ENCODE measurements at regions of chr5 and their contacts with region 1.

Region 1: DNA sequence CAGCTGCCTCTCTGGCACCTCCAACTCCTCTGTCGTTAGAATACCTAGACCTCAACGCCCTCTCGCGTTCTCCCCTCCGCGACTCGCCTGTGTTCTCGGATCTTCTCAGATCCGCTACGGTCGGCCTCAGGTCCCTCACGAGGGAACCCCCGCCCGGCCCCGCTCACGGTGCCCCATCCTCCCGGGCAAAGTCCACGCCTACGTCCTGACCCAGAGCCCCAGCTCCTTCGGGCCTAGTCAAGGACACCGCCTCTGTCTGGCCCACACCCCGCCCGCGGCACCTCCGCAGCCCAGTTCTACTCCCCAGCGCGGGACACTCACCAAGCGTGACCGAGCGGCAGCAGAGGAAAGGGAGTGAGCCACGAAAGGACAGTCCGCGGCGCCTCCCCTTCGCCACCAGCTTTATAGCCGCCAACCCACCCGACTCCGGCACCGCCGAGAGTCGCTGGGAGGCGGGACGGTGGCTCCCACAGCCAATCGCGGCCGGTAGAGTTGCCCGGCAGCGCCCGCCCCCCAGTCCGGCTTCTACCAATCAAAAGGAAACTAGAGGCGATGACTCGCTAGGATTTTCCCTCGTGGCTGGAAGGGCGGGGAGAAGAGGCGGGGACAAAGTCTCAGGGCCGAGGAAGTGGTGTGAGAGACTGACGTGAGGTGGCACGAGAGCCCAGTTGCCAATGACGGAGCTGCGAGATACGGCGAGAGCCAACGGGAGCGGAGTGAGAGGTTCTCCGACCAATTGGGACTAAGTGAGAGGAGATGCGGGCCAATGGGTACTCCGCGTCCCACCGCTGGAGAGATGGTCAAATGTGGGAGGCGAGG is at the start of gene HMGCS1:
- DNase-seq: peak; percentile 99
- H3K4me3 Mint-ChIP-seq: peak within 1 kb of the TSS; percentile 93
- H3K27ac Mint-ChIP-seq: peak within 1 kb of the TSS; percentile 98
- H3K4me1 Mint-ChIP-seq: peaks cover 73% of the 10 kb centered on the region
- H3K27me3 Mint-ChIP-seq: no peaks in the 10 kb centered on the region
- total RNA-seq, gene HMGCS1: 216 and 218 TPM in 2 replicates

Region 2: DNA sequence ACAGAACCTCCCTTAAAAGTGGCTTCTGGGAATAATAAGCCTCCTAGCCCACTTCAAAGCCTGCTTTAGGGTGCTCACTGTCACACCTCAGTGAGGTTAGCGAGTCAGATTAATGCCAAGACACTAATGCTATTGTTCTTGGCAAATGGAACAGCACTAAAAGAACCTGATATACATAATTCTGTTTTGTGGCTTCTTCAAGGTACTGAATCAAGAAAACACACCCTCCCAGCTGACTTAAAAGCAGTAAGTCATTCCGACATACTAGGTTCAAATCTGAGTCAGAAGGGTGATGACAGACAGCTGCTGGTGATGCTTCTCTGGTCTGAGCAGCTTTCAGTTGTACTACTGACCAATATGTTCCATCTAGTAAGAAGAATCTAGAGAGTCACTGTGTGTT is 1564.6 kb before region 1 on chr5:
- intact Hi-C with region 1: loop called (anchors 2 kb)
- DNase-seq: no peak
- H3K4me3 Mint-ChIP-seq: no peak overlapping the region
- H3K27ac Mint-ChIP-seq: peak overlapping the region; percentile 50
- H3K4me1 Mint-ChIP-seq: peaks cover 18% of the 10 kb centered on the region
- H3K27me3 Mint-ChIP-seq: no peaks in the 10 kb centered on the region

Region 3: DNA sequence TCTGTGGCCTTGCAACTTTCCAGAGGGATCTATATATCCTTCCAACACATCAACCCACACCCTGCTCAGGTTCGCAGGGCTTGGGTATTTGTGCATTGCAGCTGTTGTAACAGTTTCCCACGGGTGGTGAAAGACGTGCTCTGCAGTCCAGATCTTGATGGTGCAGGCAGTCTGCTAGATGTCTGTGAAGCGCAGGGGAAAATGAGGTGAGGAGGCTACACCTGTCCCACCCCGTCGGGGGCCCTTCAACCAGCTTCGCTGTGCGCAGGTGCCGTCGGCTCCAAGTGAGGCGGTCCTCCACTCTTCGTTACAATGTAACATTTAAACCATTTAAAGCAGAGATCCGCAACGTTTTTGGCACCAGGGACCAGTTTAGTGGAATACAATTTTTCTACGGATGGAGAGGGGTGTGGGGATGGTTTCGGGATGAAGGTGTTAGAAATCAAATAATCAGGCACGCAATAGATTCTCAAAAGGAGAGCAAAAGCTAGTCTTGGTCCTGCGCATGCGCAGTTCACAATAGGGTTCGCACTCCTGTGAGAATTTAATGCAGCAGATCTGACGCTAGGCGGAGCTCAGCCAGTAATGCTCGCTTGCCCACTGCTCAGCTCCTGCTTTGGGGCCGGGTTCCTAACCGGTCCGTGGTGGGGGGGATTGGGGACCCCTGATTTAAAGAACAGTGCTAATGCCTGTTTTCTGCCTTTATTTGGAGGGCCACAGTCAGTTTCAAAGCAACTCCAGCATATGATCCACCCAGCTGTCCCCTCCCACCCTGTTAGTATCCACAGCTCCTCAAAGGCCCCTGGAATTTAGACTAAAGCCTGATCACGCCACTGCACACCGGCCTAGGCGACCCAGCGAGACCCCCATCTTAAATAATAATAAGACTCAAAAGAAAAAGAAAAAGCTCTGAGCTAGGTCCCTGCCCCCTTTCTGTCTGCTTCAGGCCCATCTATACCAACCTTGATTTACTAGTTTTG is 404.4 kb before region 1 on chr5:
- intact Hi-C with region 1: loop called (anchors 5 kb)
- DNase-seq: peak; percentile 84
- H3K4me3 Mint-ChIP-seq: peak overlapping the region; percentile 81
- H3K27ac Mint-ChIP-seq: peak overlapping the region; percentile 50
- H3K4me1 Mint-ChIP-seq: peaks cover 12% of the 10 kb centered on the region
- H3K27me3 Mint-ChIP-seq: peaks cover 26% of the 10 kb centered on the region

Region 4: DNA sequence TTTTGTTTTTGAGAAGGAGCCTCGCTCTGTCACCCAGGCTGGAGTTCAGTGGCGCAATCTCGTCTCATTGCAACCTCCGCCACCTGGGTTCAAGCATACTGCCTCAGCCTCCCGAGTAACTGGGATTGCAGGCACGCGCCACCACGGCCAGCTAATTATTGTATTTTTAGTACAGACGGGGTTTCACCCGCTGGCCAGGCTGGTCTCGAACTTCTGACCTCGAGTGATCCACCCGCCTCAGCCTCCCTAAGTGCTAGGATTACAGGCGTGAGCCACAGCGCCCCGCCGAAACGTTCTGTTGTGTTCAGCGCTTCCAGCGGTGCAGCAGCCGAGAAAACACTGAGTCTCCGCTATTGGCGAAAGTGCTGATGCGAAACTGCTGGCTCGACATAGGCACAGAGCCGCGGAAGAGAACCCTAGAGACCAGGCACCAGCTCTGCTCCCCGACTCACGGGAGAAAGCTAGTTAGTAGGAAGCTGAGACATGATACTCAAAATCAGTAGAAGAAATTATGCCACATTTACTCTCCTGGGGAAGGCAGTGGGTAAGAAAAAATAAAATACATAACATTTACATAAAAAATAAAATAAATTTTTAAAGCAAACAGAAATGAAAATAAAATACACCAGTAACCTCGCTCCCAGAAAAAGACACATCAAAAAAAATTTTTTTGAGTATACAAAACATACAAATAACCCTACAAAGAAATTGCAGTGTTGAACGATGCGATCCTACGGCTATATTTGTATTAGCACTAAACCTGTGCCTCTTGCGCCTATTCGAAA is 304.7 kb before region 1 on chr5:
- intact Hi-C with region 1: loop called (anchors 2 kb)
- DNase-seq: peak; percentile 86
- H3K4me3 Mint-ChIP-seq: peak overlapping the region; percentile 90
- H3K27ac Mint-ChIP-seq: peak overlapping the region; percentile 96
- H3K4me1 Mint-ChIP-seq: peaks cover 41% of the 10 kb centered on the region
- H3K27me3 Mint-ChIP-seq: no peaks in the 10 kb centered on the region

Region 5: GRCh38 chr5:43120720-43121564 is 192.3 kb before region 1 on chr5 and contains the start of gene ZNF131:
- intact Hi-C with region 1: loop called (anchors 1 kb)
- DNase-seq: peak; percentile 96
- H3K4me3 Mint-ChIP-seq: peak within 1 kb of the TSS; percentile 95
- H3K27ac Mint-ChIP-seq: peak within 1 kb of the TSS; percentile 98
- H3K4me1 Mint-ChIP-seq: peaks cover 42% of the 10 kb centered on the region
- H3K27me3 Mint-ChIP-seq: peaks cover 2% of the 10 kb centered on the region
- total RNA-seq, gene ZNF131: 38.3 and 40.2 TPM in 2 replicates

Region 6: DNA sequence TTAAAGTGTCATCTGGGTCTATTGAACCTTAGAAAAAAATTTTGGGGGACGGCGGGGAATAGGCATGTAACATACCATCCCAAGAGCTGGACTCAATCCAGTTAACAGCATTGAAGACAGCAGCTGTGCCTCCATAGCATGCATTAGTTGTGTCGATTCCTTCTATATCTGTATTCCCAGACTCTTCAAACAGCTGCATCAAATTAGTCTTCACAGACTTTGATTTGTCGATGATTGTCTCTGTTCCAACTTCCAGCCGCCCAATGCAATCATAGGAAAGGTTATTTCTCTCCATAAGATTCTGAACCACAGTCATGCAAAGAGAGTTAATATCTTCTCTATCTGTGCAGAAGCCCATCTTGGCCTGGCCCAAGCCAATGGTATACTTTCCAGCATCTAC is 14.8 kb before region 1 on chr5:
- intact Hi-C with region 1: no loop called
- DNase-seq: no peak
- H3K4me3 Mint-ChIP-seq: no peak overlapping the region
- H3K27ac Mint-ChIP-seq: no peak overlapping the region
- H3K4me1 Mint-ChIP-seq: peaks cover 52% of the 10 kb centered on the region
- H3K27me3 Mint-ChIP-seq: no peaks in the 10 kb centered on the region

Region 7: GRCh38 chr5:43348207-43348606 is 35.0 kb after region 1 on chr5:
- intact Hi-C with region 1: no loop called
- DNase-seq: no peak
- H3K4me3 Mint-ChIP-seq: no peak overlapping the region
- H3K27ac Mint-ChIP-seq: no peak overlapping the region
- H3K4me1 Mint-ChIP-seq: no peaks in the 10 kb centered on the region
- H3K27me3 Mint-ChIP-seq: peaks cover 9% of the 10 kb centered on the region

Region 8: GRCh38 chr5:43389679-43390329 is 76.6 kb after region 1 on chr5:
- intact Hi-C with region 1: loop called (anchors 2 kb)
- DNase-seq: peak; percentile 22
- H3K4me3 Mint-ChIP-seq: no peak overlapping the region
- H3K27ac Mint-ChIP-seq: no peak overlapping the region
- H3K4me1 Mint-ChIP-seq: peaks cover 19% of the 10 kb centered on the region
- H3K27me3 Mint-ChIP-seq: no peaks in the 10 kb centered on the region

Region 9: DNA sequence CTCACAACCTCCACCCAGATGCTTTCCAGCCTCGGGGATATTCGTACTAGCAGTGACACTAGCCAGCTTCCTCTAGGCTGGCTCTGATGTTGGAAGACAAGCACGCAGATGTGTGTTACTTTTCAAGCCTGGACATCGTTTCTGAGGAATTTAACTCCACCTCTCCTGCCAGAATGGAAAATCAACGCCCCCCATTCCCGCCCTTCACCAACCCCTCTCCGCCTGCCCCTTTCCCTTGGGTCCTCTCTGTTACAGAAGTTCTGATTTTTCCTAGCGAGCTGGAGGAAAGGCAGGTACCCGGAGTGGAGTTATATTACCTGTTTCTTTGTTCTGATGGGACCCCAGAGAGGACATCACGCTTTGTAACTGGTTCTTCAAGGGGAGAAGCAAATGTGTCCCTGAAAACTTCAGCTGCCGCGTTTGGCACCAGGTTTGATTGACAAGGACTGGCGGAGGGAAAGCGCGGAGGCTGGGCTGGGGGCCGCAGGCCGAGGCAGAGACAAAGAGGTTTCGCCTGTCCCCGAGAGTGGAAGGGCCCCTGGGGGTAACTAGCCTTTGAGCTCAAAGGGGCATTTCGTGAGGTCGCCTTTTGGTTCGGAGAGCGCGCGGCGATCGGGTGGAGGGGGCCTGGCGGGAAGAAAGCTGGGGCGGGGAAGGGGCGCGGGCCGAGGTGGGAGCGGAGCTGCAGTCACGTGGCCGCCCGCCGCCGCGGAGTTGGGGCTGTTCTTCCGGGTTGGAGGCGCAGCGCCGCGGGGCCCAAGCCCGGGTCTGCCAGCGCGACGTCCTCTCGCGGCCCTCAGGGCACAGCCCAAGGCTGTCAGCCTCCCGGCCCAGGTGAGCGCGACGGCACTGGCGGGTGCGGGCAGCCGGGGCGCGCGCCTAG is 289.5 kb after region 1 on chr5 and contains the start of gene NNT:
- intact Hi-C with region 1: loop called (anchors 2 kb)
- DNase-seq: peak; percentile 76
- H3K4me3 Mint-ChIP-seq: peak within 1 kb of the TSS; percentile 91
- H3K27ac Mint-ChIP-seq: peak within 1 kb of the TSS; percentile 91
- H3K4me1 Mint-ChIP-seq: peaks cover 34% of the 10 kb centered on the region
- H3K27me3 Mint-ChIP-seq: no peaks in the 10 kb centered on the region
- total RNA-seq, gene NNT: 43.6 and 47.5 TPM in 2 replicates